CD4-positive, alpha-beta memory T cell (primary cell): ENCODE measurements at regions of chr1 and their contacts with region 1.

Region 1: DNA sequence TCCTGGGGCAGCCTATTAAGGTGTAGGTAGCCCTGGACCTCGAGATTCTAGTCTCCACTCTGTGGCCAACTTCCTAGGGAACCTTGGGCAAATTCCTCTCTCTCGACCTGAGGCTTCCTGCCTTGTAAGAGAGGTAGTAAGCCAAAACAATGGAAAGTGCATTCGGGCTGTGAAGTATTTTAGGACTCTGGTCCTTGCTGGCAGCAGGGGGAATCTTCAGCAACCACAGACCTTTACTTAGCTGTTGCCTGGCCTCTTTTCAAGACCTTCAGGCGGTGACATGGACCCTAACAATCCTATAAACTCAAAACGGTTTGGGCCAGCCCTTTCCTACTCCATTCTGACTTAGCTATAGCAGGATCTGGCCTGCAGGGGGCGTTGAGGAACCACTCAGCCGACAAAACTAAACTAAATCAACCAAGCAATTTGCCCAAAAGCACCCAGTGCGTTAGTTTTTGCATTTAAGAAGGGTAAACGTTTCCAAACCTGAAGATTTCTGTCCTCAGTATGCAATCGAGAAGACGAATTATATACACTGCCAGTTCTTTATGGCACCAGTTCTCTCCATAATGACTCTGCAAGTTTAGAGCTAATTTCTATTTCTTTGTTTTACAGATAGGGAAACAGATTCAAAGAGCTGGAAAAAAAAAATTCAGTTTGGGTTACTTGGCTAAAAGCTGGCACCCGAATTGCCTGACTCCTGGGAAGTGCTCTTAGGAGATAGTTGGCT is 10.9 kb upstream of the SESN2 start:
- DNase-seq: peak; percentile 77 to 83 (median 81)
- H3K4me3 ChIP-seq: peak overlapping the region; percentile 2 to 25
- H3K4me3 Mint-ChIP-seq: peak overlapping the region; percentile 75 to 96 (median 88)
- H3K27ac ChIP-seq: peak overlapping the region; percentile 83
- H3K27ac Mint-ChIP-seq: peak overlapping the region; percentile 88 to 99 (median 94)
- H3K4me1 ChIP-seq: peaks cover 57% of the 10 kb centered on the region
- H3K4me1 Mint-ChIP-seq: peaks cover 34 to 56% (median 48%) of the 10 kb centered on the region in 4 donors
- H3K27me3 ChIP-seq: no peaks in the 10 kb centered on the region
- H3K27me3 Mint-ChIP-seq: no peaks in the 10 kb centered on the region

Region 2: DNA sequence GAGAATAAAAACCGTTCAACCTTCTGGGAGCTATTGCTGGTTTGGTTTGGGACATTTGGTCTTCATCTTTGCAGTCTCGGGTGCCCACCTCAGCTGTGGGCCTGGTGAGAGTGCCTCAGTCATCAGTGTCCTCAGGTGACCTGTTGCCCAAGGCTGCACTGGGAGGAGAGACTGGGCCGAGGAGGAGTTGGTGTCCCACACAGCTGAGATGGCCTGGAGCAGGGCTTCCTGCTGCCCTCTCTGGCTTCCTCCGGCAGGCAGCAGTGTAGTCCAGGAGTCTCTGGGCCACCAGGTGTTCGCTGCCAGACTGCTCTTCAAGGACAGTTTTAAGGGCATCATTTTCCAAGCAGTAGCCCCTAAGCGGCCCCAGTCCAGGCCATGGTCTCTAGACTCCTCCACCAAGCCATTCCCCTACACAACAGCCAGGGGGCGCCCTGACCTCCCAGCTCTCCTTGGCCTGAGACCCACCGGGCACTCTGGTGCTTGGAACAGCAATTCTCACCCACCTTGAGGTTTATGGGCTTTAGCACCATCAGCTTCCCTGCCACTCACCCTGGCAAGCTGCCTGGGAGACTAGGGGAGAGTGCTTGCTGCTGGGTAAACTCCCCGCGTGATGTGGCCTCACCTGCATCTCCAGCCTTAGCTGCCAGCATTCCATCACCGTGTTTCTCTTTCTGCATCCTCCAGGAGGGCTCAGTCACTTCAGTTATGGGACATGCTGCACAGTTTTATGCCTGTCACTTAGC is 915.7 kb before region 1 on chr1:
- CTCF ChIA-PET with region 1: no interaction called
- POLR2A ChIA-PET with region 1: no interaction called
- intact Hi-C with region 1: no loop called
- DNase-seq: peak; percentile 54 to 65 (median 58)
- H3K4me3 ChIP-seq: no peak overlapping the region
- H3K4me3 Mint-ChIP-seq: peak overlapping the region in 2 of 8 donors; percentile 7 to 25
- H3K27ac ChIP-seq: peak overlapping the region; percentile 10
- H3K27ac Mint-ChIP-seq: peak overlapping the region in 6 of 7 donors; percentile 5 to 75 (median 61)
- H3K4me1 ChIP-seq: peaks cover 33% of the 10 kb centered on the region
- H3K4me1 Mint-ChIP-seq: peaks cover 22 to 48% (median 34%) of the 10 kb centered on the region in 4 donors
- H3K27me3 ChIP-seq: no peaks in the 10 kb centered on the region
- H3K27me3 Mint-ChIP-seq: no peaks in the 10 kb centered on the region

Region 3: DNA sequence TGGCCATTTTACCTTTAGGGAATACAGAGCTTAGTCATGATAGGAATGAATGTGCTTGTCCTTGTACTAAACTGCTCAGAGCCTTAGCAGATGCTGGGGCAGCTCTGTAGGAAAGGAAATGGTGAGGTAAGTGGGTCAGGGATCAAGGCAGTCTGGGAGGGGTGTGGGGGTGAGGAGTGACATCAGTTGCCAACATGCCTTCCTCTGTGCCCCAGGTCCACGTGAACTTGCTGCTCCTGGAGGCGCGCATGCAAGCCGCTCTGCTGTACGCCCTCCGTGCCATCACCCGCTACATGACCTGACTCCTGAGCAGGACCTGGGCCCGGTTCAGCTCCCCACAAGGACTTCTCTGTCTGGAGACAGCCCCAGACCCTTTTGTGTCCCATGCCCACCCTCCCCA is 32.1 kb after region 1 on chr1:
- CTCF ChIA-PET with region 1: interaction called, 12 read pairs
- POLR2A ChIA-PET with region 1: interaction called, 3 read pairs
- intact Hi-C with region 1: no loop called
- DNase-seq: peak in 2 of 5 donors; percentile 9 to 15
- H3K4me3 ChIP-seq: no peak overlapping the region
- H3K4me3 Mint-ChIP-seq: no peak overlapping the region
- H3K27ac ChIP-seq: no peak overlapping the region
- H3K27ac Mint-ChIP-seq: peak overlapping the region in 4 of 7 donors; percentile 63 to 81 (median 72)
- H3K4me1 ChIP-seq: no peaks in the 10 kb centered on the region
- H3K4me1 Mint-ChIP-seq: peaks cover 0 to 6% (median 5%) of the 10 kb centered on the region in 4 donors
- H3K27me3 ChIP-seq: no peaks in the 10 kb centered on the region
- H3K27me3 Mint-ChIP-seq: no peaks in the 10 kb centered on the region

Region 4: GRCh38 chr1:28369371-28370238 is 121.2 kb after region 1 on chr1 and contains the start of gene PHACTR4:
- CTCF ChIA-PET with region 1: interaction called, 15 read pairs
- POLR2A ChIA-PET with region 1: interaction called, 7 read pairs
- intact Hi-C with region 1: no loop called
- DNase-seq: peak; percentile 67 to 83 (median 72)
- H3K4me3 ChIP-seq: peak within 1 kb of the TSS; percentile 63 to 87
- H3K4me3 Mint-ChIP-seq: peak within 1 kb of the TSS; percentile 94 to 97 (median 96)
- H3K27ac ChIP-seq: peak within 1 kb of the TSS; percentile 84
- H3K27ac Mint-ChIP-seq: peak within 1 kb of the TSS; percentile 91 to 97 (median 94)
- H3K4me1 ChIP-seq: peaks cover 36% of the 10 kb centered on the region
- H3K4me1 Mint-ChIP-seq: peaks cover 21 to 45% (median 34%) of the 10 kb centered on the region in 4 donors
- H3K27me3 ChIP-seq: no peaks in the 10 kb centered on the region
- H3K27me3 Mint-ChIP-seq: no peaks in the 10 kb centered on the region
- total RNA-seq, gene PHACTR4: 27.1 to 28.8 TPM

Region 5: DNA sequence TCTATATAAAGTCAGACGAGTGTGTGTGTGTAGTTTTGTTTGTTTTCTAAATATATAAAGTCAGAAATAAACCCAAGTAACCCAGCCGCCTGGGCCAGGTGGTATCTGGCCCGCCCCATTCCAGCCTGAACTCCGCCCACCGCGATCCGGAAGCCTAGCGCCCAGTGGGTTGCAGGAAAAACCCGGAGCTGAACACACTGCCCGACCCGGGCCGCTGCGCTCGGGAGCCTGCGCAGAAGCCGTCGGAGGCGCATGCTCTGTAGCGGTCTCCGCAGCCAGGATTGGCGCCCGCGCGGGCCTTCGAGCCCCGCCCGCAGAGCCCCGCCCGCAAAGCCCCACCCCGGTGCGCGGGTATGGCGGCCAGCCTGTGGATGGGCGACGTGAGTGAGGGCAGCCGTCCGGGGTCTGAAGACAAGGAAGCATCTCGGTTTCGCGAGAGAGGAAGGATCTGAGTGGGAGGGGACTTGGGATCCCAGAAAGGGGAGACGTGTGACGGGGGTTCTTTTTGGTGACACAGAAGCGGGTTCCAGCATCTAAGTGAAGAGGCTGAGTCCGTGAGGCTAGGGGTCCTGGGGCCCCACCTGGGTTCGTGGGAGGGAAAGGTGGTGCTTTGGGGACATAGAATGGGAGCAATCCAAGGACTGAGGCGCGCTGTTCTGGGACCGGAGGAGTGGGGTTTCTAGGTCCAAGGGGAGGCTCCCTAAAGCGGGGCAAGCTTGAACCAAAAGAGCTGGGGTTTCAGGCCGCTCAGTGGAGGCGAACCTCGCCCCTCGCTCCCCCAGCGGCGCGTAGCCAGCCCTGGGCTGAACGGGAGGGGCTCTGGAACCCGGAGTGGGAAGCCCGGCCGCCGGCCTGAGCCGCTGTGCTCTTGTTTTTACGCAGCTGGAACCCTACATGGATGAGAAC is 304.6 kb after region 1 on chr1 and contains the start of gene TRNAU1AP:
- CTCF ChIA-PET with region 1: interaction called, 5 read pairs
- POLR2A ChIA-PET with region 1: interaction called, 5 read pairs
- intact Hi-C with region 1: loop called (anchors 2 kb)
- DNase-seq: peak; percentile 96 to 98 (median 97)
- H3K4me3 ChIP-seq: peak within 1 kb of the TSS; percentile 89 to 96
- H3K4me3 Mint-ChIP-seq: peak within 1 kb of the TSS; percentile 98 to 100 (median 99)
- H3K27ac ChIP-seq: peak within 1 kb of the TSS; percentile 80
- H3K27ac Mint-ChIP-seq: peak within 1 kb of the TSS; percentile 96 to 99 (median 98)
- H3K4me1 ChIP-seq: peaks cover 21% of the 10 kb centered on the region
- H3K4me1 Mint-ChIP-seq: peaks cover 11 to 35% (median 19%) of the 10 kb centered on the region in 4 donors
- H3K27me3 ChIP-seq: no peaks in the 10 kb centered on the region
- H3K27me3 Mint-ChIP-seq: no peaks in the 10 kb centered on the region
- total RNA-seq, gene TRNAU1AP: 46.3 to 46.7 TPM

Region 6: GRCh38 chr1:28736450-28737306 is 488.2 kb after region 1 on chr1 and contains the start of gene YTHDF2:
- CTCF ChIA-PET with region 1: interaction called, 5 read pairs
- POLR2A ChIA-PET with region 1: interaction called, 5 read pairs
- intact Hi-C with region 1: loop called (anchors 1 kb)
- DNase-seq: peak; percentile 97
- H3K4me3 ChIP-seq: peak within 1 kb of the TSS; percentile 55 to 59
- H3K4me3 Mint-ChIP-seq: peak within 1 kb of the TSS; percentile 92 to 99 (median 96)
- H3K27ac ChIP-seq: peak within 1 kb of the TSS; percentile 90
- H3K27ac Mint-ChIP-seq: peak within 1 kb of the TSS; percentile 93 to 98 (median 97)
- H3K4me1 ChIP-seq: peaks cover 43% of the 10 kb centered on the region
- H3K4me1 Mint-ChIP-seq: peaks cover 18 to 51% (median 29%) of the 10 kb centered on the region in 4 donors
- H3K27me3 ChIP-seq: no peaks in the 10 kb centered on the region
- H3K27me3 Mint-ChIP-seq: peaks cover 0 to 2% of the 10 kb centered on the region in 2 donors
- total RNA-seq, gene YTHDF2: 65.1 to 76.8 TPM